ENCODE measurements at regions of chr12 and their contacts with region 1.

Region 1: GRCh38 chr12:105382771-105383622 is 52.5 kb downstream of the C12orf75 start:
- DNase-seq: no peak
- ATAC-seq: peak; percentile 73
- H3K4me3 Mint-ChIP-seq: no peak overlapping the region
- H3K27ac Mint-ChIP-seq: no peak overlapping the region
- H3K4me1 Mint-ChIP-seq: no peaks in the 10 kb centered on the region
- H3K27me3 Mint-ChIP-seq: no peaks in the 10 kb centered on the region

Region 2: DNA sequence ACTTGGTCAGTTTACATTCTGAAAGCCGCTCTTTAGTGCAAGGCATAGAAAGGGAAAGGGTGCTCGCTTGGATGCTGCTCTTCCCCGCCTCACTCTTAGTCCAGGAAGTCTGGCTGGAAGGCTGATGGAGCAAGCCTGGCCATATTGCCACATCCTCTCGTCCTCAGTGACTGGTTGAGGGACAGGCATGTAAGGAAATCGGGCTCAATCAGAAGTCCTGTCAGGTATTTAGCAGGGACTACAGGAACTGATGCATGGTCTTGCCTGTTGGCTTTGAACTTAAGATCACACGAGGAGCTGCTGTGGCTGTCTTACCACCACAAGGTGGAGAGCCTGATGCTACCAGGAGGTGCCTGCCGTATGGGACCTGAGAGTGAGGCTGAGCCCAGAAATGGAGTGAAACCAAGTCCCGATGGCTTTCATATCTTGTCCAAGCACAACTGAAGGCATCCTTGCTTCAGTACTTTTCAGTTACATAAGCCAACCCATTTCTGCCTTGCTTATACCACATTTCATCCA is 63.2 kb before region 1 on chr12:
- CTCF ChIA-PET with region 1: interaction called, 13 read pairs
- DNase-seq: no peak
- ATAC-seq: no peak
- H3K4me3 Mint-ChIP-seq: no peak overlapping the region
- H3K27ac Mint-ChIP-seq: no peak overlapping the region
- H3K4me1 Mint-ChIP-seq: peaks cover 55% of the 10 kb centered on the region
- H3K27me3 Mint-ChIP-seq: no peaks in the 10 kb centered on the region

Region 3: GRCh38 chr12:105330283-105330930 is 52.6 kb before region 1 on chr12 and contains the start of gene C12orf75:
- CTCF ChIA-PET with region 1: interaction called, 12 read pairs
- DNase-seq: peak; percentile 97
- ATAC-seq: peak; percentile 86
- H3K4me3 Mint-ChIP-seq: peak within 1 kb of the TSS; percentile 95
- H3K27ac Mint-ChIP-seq: peak within 1 kb of the TSS; percentile 89
- H3K4me1 Mint-ChIP-seq: peaks cover 78% of the 10 kb centered on the region
- H3K27me3 Mint-ChIP-seq: no peaks in the 10 kb centered on the region
- total RNA-seq, gene C12orf75: 277 to 318 TPM